IMR-90 (cell line): ENCODE measurements at regions of chr13 and their contacts with region 1.

Region 1: GRCh38 chr13:72415817-72416216 is 311.6 kb downstream of the MZT1 start:
- DNase-seq: no peak
- ATAC-seq: no peak
- H3K4me3 ChIP-seq: no peak overlapping the region
- H3K27ac ChIP-seq: no peak overlapping the region
- H3K4me1 ChIP-seq: no peaks in the 10 kb centered on the region
- H3K27me3 ChIP-seq: no peaks in the 10 kb centered on the region
- CTCF ChIP-seq: no peak
- POLR2A ChIP-seq: no peak
- RAD21 ChIP-seq: no peak

Region 2: DNA sequence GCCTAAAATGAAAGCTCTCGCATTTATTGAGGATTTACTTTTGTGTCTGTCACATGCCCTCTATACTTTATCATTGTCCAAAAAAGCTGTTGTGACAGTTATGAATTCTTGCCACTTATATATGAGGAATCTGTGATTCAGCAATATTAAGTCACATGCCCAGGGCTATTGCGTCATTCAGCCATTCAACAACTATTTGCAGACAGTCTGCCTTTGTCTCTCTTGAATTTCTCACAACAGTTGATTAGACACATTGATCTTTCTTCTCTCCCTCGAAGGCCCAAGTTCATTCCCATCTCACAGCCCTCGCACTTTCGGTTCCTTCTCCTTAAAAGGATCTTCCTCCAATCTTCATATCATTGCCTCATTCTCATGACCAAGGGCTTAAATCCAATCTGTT is 30.9 kb before region 1 on chr13:
- CTCF ChIA-PET with region 1: no interaction called
- POLR2A ChIA-PET with region 1: no interaction called
- dilution Hi-C with region 1: no loop called
- in situ Hi-C with region 1: no loop called
- intact Hi-C with region 1: loop called (anchors 1 kb)
- DNase-seq: peak; percentile 1
- ATAC-seq: no peak
- H3K4me3 ChIP-seq: no peak overlapping the region
- H3K27ac ChIP-seq: no peak overlapping the region
- H3K4me1 ChIP-seq: no peaks in the 10 kb centered on the region
- H3K27me3 ChIP-seq: no peaks in the 10 kb centered on the region
- CTCF ChIP-seq: no peak
- POLR2A ChIP-seq: no peak
- RAD21 ChIP-seq: no peak